ENCODE measurements at regions of chr12 and their contacts with region 1.

Region 1: DNA sequence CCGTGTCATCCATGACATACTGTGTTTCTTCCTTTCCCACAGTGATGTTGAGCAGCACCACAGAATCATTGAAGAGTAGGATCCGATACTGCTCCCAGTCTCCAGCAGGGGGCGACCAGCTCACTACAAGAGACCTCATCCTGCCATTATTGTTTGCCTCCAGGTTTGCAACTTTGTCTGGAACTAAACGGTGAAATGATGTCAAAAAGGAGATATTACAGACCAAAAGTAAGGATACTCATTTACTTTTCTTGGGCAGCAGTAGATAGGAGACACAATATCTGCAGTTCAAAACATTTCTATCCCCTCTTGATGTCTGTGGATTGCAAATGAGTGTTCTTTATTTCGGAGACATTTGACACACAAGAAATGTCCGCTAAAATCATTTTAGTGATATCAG is 47.2 kb downstream of the PTPRB start:
- DNase-seq: peak; percentile 69 to 86 (median 70)
- ATAC-seq: peak; percentile 98
- H3K4me3 ChIP-seq: no peak overlapping the region
- H3K27ac ChIP-seq: no peak overlapping the region
- H3K4me1 ChIP-seq: peaks cover 0 to 3% of the 10 kb centered on the region in 2 experiments; a peak in 1 of 5 replicates
- H3K27me3 ChIP-seq: no peaks in the 10 kb centered on the region
- CTCF ChIP-seq: peak; percentile 81 to 90 (median 85)
- EP300 ChIP-seq: no peak
- POLR2A ChIP-seq: no peak
- RAD21 ChIP-seq: peak; percentile 92 to 96

Region 2: GRCh38 chr12:69616025-69616424 is 974.0 kb before region 1 on chr12:
- CTCF ChIA-PET with region 1: no interaction called
- POLR2A ChIA-PET with region 1: no interaction called
- in situ Hi-C with region 1: no loop called
- intact Hi-C with region 1: no loop called
- DNase-seq: no peak
- ATAC-seq: peak; percentile 59
- H3K4me3 ChIP-seq: no peak overlapping the region
- H3K27ac ChIP-seq: no peak overlapping the region
- H3K4me1 ChIP-seq: peaks cover 0 to 2% of the 10 kb centered on the region in 2 experiments; a peak in 3 of 5 replicates
- H3K27me3 ChIP-seq: no peaks in the 10 kb centered on the region; a peak in 1 of 5 replicates
- CTCF ChIP-seq: no peak
- EP300 ChIP-seq: no peak
- POLR2A ChIP-seq: no peak
- RAD21 ChIP-seq: no peak

Region 3: DNA sequence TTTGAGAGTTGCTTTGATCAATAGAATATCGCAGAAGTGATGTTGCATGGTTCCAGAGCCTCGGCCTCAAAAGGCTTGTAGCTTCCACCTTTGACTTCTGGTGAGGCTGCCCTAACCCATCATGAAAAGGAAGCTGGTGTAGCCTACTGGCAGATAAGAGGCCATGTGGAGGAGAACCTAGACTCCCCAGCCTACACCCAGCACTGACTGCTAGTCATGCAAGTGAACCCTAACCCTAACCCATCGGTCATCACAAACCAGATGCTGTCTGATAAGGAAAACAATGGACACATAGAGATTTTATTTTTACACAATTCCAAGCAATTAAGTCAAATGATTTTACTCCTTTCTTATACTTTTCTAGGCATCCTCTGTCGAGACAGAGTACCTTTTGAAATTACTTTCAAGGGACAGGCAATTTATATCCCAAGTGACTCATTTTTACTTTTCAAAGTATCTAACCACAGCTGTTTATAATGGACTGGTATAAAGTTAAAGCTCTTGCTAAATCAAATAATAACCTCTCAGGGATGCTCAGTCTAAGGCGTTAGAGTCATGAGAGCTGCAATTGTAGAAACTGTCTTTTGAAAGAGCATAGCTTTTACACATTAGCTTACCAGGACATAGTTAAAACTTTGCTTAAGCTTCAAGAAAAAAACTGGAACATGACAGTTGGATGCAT is 29.6 kb after region 1 on chr12:
- CTCF ChIA-PET with region 1: no interaction called
- POLR2A ChIA-PET with region 1: no interaction called
- in situ Hi-C with region 1: no loop called
- intact Hi-C with region 1: no loop called
- DNase-seq: peak in 3 of 4 experiments; percentile 14 to 64 (median 32)
- ATAC-seq: peak; percentile 86
- H3K4me3 ChIP-seq: no peak overlapping the region
- H3K27ac ChIP-seq: peak overlapping the region; percentile 19; the same call in 1 of the 3 replicates
- H3K4me1 ChIP-seq: peaks cover 0 to 7% of the 10 kb centered on the region in 2 experiments; a peak in 3 of 5 replicates
- H3K27me3 ChIP-seq: no peaks in the 10 kb centered on the region
- CTCF ChIP-seq: 0 out of 6 replicates have a peak, but pooled peaks of 1 of the 3 experiments have one; percentile 8
- EP300 ChIP-seq: no peak
- POLR2A ChIP-seq: no peak
- RAD21 ChIP-seq: peak in 1 of 2 experiments; percentile 45; a peak in 2 of 4 replicates

Region 4: DNA sequence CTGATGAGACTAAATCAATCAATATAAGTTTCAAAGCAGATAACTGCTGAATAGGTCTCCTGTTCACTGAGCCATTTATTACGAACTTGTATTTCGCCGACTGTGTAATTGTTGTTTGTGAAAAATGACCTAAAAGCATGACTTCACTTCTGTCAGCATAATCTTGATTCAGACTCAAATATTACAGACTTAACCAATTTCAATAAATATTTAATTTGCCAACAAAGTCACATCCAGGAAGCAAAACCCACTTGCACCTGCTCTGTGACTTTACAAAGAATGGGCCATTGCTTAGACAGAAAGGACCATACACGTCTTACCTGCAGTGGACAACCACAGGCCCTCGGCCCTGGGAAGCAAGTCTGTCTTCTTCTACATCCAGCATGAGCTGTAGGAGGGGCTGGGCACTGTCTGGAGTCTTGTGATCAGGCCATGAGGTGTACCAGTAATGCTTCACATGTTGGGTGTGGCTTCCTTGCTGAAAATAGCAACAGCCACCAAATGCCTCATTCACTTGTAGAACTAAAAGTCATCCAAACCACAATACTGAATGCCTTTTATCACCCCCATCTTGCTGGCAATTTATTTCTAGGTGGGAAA is 70.7 kb after region 1 on chr12:
- CTCF ChIA-PET with region 1: no interaction called
- POLR2A ChIA-PET with region 1: no interaction called
- in situ Hi-C with region 1: no loop called
- intact Hi-C with region 1: loop called (anchors 1 kb)
- DNase-seq: peak; percentile 27 to 95 (median 54)
- ATAC-seq: peak; percentile 91
- H3K4me3 ChIP-seq: peak overlapping the region; percentile 33
- H3K27ac ChIP-seq: peak overlapping the region; percentile 81
- H3K4me1 ChIP-seq: peaks cover 4 to 43% of the 10 kb centered on the region in 2 experiments
- H3K27me3 ChIP-seq: no peaks in the 10 kb centered on the region
- CTCF ChIP-seq: no peak
- EP300 ChIP-seq: peak; percentile 81
- POLR2A ChIP-seq: peak; percentile 89
- RAD21 ChIP-seq: peak in 1 of 2 experiments; percentile 12; a peak in 1 of 4 replicates

Region 5: GRCh38 chr12:70671698-70672097 is 81.6 kb after region 1 on chr12:
- CTCF ChIA-PET with region 1: no interaction called
- POLR2A ChIA-PET with region 1: no interaction called
- in situ Hi-C with region 1: no loop called
- intact Hi-C with region 1: no loop called
- DNase-seq: no peak
- ATAC-seq: no peak
- H3K4me3 ChIP-seq: no peak overlapping the region
- H3K27ac ChIP-seq: no peak overlapping the region
- H3K4me1 ChIP-seq: no peaks in the 10 kb centered on the region; a peak in 2 of 5 replicates
- H3K27me3 ChIP-seq: no peaks in the 10 kb centered on the region
- CTCF ChIP-seq: no peak
- EP300 ChIP-seq: no peak
- POLR2A ChIP-seq: no peak
- RAD21 ChIP-seq: no peak

Region 6: DNA sequence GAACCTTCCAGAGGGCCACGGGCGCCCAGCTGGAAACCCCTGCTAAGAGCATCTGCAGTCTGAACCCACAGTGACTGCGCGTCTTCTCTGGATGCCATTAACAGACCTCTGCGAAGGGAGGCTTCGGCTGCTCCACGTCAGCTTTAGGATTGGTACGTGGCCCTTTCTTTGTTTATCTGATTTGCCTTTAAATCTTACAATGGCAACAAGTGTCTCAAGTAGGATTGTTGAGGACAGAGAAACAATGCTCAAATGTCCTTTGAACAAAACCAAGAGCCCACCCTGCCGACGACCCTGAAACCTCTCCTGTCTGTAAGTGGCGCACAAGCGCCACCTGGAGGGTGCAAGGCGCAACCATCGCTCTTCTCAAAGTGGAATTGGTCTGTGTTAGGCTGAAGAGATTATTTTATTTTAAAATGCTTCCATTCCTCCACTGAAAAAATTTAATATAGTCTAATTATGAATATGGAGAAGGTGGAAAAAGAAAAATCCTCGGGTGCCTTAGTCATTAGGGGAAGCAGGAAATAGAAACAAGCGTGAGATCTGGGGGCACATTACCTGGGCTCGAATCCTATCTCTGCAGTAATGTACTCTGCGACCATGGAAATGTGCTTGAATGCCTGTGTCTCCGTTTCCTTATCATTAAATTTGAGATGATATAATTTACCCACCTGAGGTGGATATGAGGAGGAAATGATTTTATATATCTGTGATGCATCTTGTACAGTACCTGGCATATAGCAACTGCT is 129.8 kb after region 1 on chr12:
- CTCF ChIA-PET with region 1: interaction called, 48 read pairs
- POLR2A ChIA-PET with region 1: no interaction called
- in situ Hi-C with region 1: loop called (anchors 5 kb)
- intact Hi-C with region 1: loop called (anchors 1 kb)
- DNase-seq: peak; percentile 37 to 57 (median 42)
- ATAC-seq: peak; percentile 89
- H3K4me3 ChIP-seq: no peak overlapping the region
- H3K27ac ChIP-seq: no peak overlapping the region
- H3K4me1 ChIP-seq: no peaks in the 10 kb centered on the region; a peak in 1 of 5 replicates
- H3K27me3 ChIP-seq: no peaks in the 10 kb centered on the region
- CTCF ChIP-seq: peak; percentile 90 to 94 (median 91)
- EP300 ChIP-seq: no peak
- POLR2A ChIP-seq: no peak
- RAD21 ChIP-seq: peak; percentile 97 to 99

Region 7: DNA sequence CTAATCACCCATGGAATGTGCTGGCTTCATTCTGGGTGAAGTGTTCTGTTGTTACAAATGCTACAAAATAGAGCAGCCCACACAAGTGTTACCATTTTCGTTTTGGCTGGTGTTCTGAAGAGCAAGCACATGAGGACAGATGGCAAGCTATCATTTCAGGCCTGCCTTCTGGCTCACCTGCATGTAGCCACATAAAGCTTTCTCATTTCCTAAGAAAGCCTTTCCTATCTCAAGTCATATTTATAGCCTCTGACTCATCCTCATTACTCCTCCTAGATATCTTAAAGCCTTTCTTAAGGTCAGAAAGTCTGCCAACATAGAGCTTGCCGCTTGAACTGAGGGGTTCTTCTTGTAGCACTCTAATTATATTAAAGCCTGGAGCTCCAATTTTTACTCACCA is 241.5 kb after region 1 on chr12:
- CTCF ChIA-PET with region 1: no interaction called
- POLR2A ChIA-PET with region 1: no interaction called
- in situ Hi-C with region 1: no loop called
- intact Hi-C with region 1: loop called (anchors 10 kb)
- DNase-seq: peak in 2 of 4 experiments; percentile 18 to 23
- ATAC-seq: no peak
- H3K4me3 ChIP-seq: no peak overlapping the region
- H3K27ac ChIP-seq: no peak overlapping the region
- H3K4me1 ChIP-seq: no peaks in the 10 kb centered on the region; a peak in 2 of 5 replicates
- H3K27me3 ChIP-seq: no peaks in the 10 kb centered on the region; a peak in 1 of 5 replicates
- CTCF ChIP-seq: no peak
- EP300 ChIP-seq: no peak
- POLR2A ChIP-seq: no peak
- RAD21 ChIP-seq: no peak

Region 8: GRCh38 chr12:70849265-70849960 is 259.4 kb after region 1 on chr12:
- CTCF ChIA-PET with region 1: no interaction called
- POLR2A ChIA-PET with region 1: no interaction called
- in situ Hi-C with region 1: loop called (anchors 5 kb)
- intact Hi-C with region 1: no loop called
- DNase-seq: peak in 3 of 4 experiments; percentile 8 to 25 (median 24)
- ATAC-seq: peak; percentile 49; the same call in 1 of the 3 replicates
- H3K4me3 ChIP-seq: no peak overlapping the region
- H3K27ac ChIP-seq: no peak overlapping the region
- H3K4me1 ChIP-seq: no peaks in the 10 kb centered on the region
- H3K27me3 ChIP-seq: peaks cover 0 to 3% of the 10 kb centered on the region in 2 experiments; a peak in 1 of 5 replicates
- CTCF ChIP-seq: peak; percentile 23 to 65 (median 42); a peak in 4 of 6 replicates
- EP300 ChIP-seq: no peak
- POLR2A ChIP-seq: no peak
- RAD21 ChIP-seq: peak; percentile 72 to 85

Region 9: DNA sequence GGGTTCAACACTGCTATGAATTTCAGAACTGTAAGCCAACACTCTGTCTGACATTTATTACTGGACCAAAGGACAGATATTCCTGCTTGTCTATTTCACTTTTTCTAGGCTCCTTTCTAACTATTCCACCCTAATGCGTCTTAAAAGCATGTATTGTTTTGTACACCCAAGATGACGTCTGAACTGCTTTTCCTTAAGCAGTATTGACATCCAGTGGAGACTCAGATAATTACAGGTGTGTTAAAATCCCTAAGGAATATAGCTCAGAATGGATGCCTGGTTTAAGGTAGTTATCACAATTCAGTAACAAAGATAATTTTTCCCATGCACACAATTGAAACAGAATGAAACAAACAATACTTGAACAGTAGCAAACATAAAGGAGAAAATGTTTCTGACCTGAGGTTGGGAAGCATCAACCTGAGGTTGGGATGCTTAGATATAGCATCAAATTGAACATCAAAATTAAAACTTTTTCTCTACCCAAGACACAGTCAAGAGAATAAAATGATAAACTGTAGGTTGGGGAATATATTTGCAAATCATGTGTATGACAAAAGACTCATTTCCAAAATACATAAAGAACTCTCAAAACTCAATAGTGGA is 424.2 kb after region 1 on chr12:
- CTCF ChIA-PET with region 1: no interaction called
- POLR2A ChIA-PET with region 1: no interaction called
- in situ Hi-C with region 1: loop called (anchors 25 kb)
- intact Hi-C with region 1: no loop called
- DNase-seq: peak in 2 of 4 experiments; percentile 7 to 29
- ATAC-seq: peak; percentile 42; the same call in 1 of the 3 replicates
- H3K4me3 ChIP-seq: no peak overlapping the region
- H3K27ac ChIP-seq: no peak overlapping the region
- H3K4me1 ChIP-seq: no peaks in the 10 kb centered on the region
- H3K27me3 ChIP-seq: no peaks in the 10 kb centered on the region
- CTCF ChIP-seq: peak in 2 of 3 experiments; percentile 17 to 56; a peak in 4 of 6 replicates
- EP300 ChIP-seq: no peak
- POLR2A ChIP-seq: no peak
- RAD21 ChIP-seq: peak; percentile 89 to 91

Region 10: DNA sequence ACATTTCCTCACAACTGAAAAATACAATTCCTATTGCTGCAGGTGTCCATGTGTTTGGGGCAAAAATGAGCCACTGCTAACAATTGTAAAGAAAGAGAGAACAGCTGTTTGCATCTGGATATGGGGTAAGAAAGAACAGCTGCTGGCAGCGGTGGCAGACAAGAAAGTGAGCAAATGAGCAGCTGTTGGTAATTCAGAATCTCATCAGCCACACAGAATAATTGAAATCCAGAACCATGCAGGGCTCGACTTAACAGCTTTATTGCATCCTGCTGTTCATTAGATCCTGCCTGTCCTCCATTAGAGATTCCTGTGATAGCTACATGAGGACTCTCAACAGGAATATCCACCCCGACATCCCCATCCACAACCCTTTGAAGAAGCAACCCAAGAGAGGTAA is 630.2 kb after region 1 on chr12:
- CTCF ChIA-PET with region 1: no interaction called
- POLR2A ChIA-PET with region 1: no interaction called
- in situ Hi-C with region 1: no loop called
- intact Hi-C with region 1: no loop called
- DNase-seq: no peak
- ATAC-seq: no peak
- H3K4me3 ChIP-seq: no peak overlapping the region
- H3K27ac ChIP-seq: no peak overlapping the region
- H3K4me1 ChIP-seq: peaks cover 0 to 9% of the 10 kb centered on the region in 2 experiments; a peak in 2 of 5 replicates
- H3K27me3 ChIP-seq: no peaks in the 10 kb centered on the region
- CTCF ChIP-seq: no peak
- EP300 ChIP-seq: no peak
- POLR2A ChIP-seq: no peak
- RAD21 ChIP-seq: no peak

Measured in K562 (cell line).